Breast epithelium (tissue), 4 donors: ENCODE measurements at regions of chr7 and their contacts with region 1.

Region 1: DNA sequence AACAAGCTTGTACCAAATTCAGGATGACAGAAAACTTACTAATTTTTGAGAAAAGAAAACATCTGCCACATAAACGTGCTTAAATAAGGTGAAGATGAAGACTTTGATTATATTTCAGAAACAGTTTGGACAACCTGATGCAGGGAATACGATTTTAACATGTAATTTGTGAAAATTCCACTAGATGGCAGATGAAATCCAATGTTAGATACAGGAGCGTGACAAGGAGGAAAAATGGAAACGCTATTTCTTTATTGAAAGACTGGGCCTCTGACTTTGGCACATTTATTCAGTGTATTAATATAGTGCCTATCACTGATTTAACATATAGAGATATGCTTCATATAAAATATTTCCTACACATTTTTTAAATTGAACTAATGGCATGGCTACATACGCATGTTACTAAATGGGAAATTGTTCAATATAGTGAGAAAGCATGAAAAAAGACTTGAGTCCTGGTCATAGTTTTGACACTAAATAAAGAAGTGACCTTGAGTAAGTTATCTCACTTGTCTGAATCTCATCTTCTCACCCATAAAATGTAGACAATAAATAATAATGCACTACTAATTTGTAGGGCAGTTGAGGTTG is 60.7 kb downstream of the CD36 start:
- DNase-seq: no peak
- H3K4me3 ChIP-seq: no peak overlapping the region
- H3K27ac ChIP-seq: no peak overlapping the region
- H3K4me1 ChIP-seq: no peaks in the 10 kb centered on the region
- H3K27me3 ChIP-seq: no peaks in the 10 kb centered on the region
- CTCF ChIP-seq: peak; percentile 78 to 90 (median 86)
- POLR2A ChIP-seq: no peak

Region 2: GRCh38 chr7:81469869-81470723 is 771.0 kb after region 1 on chr7:
- intact Hi-C with region 1: loop called (anchors 5 kb)
- DNase-seq: peak; percentile 38 to 63
- H3K4me3 ChIP-seq: no peak overlapping the region
- H3K27ac ChIP-seq: no peak overlapping the region
- H3K4me1 ChIP-seq: no peaks in the 10 kb centered on the region
- H3K27me3 ChIP-seq: no peaks in the 10 kb centered on the region
- CTCF ChIP-seq: peak in 2 of 3 donors; percentile 66 to 70
- POLR2A ChIP-seq: no peak

Region 3: GRCh38 chr7:81690251-81690650 is 991.1 kb after region 1 on chr7:
- intact Hi-C with region 1: loop called (anchors 5 kb)
- DNase-seq: peak in 1 of 2 donors; percentile 21
- H3K4me3 ChIP-seq: no peak overlapping the region
- H3K27ac ChIP-seq: peak overlapping the region; percentile 26 to 58
- H3K4me1 ChIP-seq: peaks cover 0 to 5% of the 10 kb centered on the region in 2 donors
- H3K27me3 ChIP-seq: no peaks in the 10 kb centered on the region
- CTCF ChIP-seq: no peak
- POLR2A ChIP-seq: no peak